GM10248 (cell line): ENCODE measurements at regions of chr17 and their contacts with region 1.

Region 1: DNA sequence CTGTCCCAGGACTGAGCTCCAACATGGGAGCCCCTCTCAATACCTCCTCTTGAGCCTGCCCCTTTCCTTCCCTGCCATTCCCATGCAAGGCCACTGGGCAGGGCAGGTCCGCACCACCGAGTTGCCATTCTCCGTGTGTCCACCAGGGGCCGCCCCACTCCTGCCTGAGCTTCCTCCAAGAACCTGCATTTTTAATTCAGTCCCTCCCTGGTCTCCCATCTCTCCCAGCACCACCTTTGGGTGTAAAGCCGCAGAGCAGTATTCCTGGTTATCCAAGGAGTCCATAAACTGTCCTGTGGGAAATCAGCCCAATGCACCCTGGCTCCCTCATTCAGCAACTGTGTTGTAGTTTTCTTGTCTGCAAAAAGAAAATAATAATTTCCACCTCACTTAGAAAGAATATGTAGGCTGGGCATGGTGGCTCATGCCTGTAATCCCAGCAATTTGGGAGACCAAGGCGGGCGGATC is 15.9 kb upstream of the ANKRD40CL start:
- DNase-seq: peak; percentile 89
- CTCF ChIP-seq: peak; percentile 99

Region 2: DNA sequence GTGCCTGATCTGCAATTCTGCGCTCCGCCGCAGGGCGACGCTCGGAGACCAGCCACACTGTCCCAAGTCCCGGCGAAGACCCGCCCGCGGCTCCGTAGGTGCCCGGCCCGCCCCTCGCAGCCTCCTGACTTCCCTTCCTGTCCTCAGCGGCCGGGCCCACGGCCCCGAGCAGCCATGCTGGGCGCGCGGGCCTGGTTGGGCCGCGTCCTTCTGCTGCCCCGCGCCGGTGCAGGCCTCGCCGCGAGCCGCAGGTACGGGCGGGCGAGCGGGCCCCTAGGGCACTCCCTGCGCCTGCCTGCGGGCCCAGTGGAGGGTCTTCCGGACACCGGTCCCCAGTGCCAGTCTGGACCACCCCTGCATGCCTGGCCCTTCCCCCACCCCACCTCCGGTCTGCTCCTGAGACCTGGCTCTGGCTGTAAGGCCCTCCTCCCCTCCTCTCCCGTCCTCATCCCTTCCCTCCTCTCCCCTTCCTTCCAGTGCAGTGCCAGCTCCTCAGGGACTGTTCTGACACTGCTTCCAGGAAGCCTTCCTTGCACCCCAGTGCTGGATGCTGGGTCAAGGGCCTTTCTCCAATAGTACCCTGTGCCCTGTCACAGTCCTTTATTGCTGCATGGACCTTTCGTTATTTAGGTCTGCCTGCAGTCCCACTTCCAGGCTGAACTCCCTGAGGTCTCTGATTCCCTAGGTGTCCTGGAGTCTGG is 236.0 kb before region 1 on chr17 and contains the start of gene SPATA20:
- CTCF ChIA-PET with region 1: no interaction called
- POLR2A ChIA-PET with region 1: no interaction called
- DNase-seq: peak; percentile 92
- CTCF ChIP-seq: peak; percentile 98

Region 3: GRCh38 chr17:50765454-50766221 is 17.6 kb before region 1 on chr17:
- CTCF ChIA-PET with region 1: interaction called, 85 read pairs
- POLR2A ChIA-PET with region 1: no interaction called
- DNase-seq: peak; percentile 49
- CTCF ChIP-seq: no peak

Region 4: GRCh38 chr17:50798424-50799288 is 15.4 kb after region 1 on chr17:
- CTCF ChIA-PET with region 1: interaction called, 32 read pairs
- POLR2A ChIA-PET with region 1: no interaction called
- DNase-seq: no peak
- CTCF ChIP-seq: no peak

Region 5: DNA sequence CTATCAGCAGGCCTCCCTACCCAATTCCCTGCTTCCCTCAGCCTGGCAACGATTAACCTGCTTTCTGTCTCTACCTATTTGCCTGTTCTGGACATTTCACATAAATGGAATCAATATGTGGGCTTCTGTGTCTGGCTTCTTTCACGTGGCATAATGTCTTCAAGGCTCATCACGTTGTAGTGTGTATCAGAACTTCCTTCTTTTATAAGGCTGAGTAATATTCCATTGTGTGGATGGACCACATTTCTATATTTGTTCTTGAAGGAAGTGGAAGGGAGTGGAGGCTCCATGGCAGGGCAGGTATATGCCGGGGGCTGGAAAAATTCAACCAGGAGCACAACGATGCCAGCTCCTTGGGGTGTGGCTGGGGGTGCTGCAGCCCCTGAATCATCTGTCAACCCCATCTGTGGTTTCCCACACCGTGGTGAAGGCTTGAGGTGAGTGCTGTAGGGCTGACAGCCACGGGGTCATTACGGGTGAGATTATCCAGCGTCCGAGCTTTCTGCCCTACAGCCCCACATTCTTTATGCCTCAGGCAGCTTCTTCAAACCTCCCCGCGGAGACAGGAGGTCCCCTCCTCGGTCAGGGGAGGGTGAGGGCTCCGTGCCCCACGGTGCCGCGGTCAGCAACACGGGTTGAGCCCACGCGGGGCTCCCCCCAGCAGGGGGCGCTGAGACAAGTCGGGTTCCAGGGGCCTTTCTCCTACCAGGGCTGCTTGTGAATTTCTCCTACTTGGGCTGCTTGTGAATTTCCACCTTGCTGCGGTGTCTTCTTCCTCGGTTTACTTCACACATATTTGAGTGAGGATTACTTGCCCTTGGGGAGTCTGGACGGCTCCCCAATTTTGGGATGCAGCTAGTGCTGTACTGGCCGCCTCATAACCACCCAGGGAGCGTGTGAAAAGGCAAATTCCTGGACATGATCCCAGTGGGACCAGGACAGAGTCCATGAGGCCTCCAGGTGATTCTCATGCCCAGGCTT is 33.8 kb after region 1 on chr17:
- CTCF ChIA-PET with region 1: interaction called, 28 read pairs
- POLR2A ChIA-PET with region 1: no interaction called
- DNase-seq: peak; percentile 71
- CTCF ChIP-seq: peak; percentile 66

Region 6: DNA sequence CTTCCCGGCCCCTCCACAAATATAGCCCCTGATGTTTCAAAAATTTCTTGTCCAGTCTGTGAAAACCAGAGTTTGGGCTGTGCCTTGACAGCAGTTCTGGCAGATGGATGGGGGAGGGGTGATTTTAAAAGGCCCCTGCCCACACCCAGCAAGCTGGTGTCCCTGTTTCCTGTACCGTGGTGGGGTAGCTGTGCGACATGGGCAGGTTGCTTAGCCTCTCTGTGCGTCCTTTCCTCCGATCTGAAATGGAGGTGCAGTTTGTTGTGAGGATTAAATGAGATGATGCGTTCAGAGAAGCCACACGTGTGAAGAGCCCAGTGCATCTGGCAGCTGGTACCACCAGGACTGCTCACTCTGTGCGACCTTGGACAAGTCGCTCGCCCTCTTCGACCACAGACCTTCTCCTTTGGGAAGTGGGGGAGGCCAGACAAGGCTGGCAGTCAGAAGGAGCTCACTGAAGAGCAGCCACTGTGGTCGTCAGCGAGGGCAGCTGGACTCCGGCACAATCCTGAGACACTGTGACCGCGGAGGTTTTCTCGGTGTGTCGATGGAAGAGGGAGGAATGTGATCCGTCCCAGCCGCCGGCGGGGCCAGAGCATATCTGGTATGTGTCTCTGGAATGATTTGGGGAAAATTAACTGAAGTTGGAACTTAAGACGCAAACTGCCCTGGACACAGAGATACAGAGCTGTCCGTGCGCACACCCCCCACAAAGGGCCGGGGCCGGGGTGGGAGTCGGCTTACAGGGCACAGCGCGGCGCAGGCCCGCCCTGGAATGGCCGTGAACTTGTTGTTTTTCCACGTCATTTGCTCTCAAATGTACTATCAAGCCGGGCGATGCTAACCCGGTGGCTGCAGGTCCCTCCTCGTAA is 51.4 kb after region 1 on chr17:
- CTCF ChIA-PET with region 1: interaction called, 301 read pairs
- POLR2A ChIA-PET with region 1: no interaction called
- DNase-seq: no peak
- CTCF ChIP-seq: no peak

Region 7: DNA sequence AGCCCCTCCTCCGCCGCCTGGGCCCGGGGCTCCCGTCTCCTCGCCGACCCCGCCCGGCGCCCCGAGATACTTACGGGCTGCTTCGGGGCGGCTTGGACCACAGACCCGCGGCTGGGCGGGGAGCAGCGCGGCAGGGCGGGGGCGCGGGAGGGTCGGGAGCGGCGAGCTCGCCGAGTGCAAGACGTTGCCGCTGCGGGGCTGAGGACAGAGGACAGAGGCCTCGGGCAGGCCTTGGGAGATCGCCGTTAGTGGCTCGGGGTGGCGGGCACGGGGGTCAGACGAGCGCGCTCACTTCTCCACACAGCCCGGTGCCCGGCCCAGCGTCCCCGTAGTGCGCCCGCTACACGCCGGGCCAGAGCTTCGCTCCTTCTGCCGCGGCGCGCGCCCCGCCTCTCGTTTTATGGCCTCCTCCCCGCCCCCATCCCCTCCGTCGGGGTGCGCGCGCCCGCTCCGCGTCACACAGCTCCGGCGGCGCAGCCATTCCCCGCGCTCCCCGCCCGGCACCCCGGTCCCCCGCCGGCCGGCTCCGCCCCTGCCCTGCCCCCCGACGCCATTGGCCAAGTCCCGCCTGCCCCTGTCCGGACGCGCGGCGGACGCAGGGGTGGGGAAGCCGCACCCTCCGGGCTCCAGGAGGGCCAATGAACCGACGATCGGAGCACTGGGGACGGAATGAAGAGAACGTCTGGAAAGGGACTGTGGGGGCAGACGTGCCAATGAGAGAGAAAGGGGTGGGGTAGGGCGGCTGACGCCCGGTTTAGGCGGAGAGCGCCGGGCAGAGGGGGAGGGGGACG is 83.0 kb after region 1 on chr17 and contains the start of gene TOB1:
- CTCF ChIA-PET with region 1: interaction called, 21 read pairs
- POLR2A ChIA-PET with region 1: interaction called, 5 read pairs
- DNase-seq: peak; percentile 97
- CTCF ChIP-seq: no peak

Region 8: DNA sequence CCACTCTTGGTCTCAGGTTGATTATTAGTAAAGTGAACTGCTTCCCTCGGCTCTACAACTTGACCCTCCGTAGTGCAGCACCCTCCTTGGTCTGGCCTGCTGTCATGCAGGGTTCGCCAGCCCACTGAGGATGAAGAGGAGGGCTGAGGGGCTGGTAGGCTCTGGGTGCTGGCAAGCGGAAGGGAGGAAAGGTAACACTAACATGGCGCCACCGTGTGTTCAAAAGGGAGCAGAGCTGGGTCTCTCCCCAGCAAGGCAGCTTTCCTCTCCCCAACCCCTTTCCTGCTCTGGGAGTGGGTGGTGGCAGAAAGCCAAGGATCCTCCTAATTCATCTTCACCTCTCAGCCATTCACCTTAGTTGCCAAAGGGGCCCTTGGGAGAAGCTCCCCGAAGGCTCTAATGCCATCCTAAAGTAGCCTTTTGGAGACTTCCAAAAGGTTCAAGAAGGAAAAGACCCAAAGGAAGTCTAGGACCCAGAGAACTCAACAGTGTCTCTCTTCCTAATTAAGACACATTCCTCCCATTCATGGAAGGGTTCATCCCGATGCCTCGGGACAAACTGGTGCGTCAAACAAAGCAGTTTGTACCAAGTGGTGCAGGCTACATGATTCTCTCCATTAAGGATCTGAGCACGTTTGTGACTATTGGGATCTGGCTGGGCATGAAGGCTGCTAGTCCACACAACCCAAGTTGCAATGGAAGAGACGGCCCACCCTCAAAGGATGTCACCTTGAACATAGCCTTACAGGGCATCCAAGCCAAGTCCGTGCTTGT is 173.7 kb after region 1 on chr17:
- CTCF ChIA-PET with region 1: interaction called, 21 read pairs
- POLR2A ChIA-PET with region 1: no interaction called
- DNase-seq: peak; percentile 74
- CTCF ChIP-seq: peak; percentile 82